Psoas muscle (tissue), 8 donors: ENCODE measurements at regions of chr1 and their contacts with region 1.

Region 1: DNA sequence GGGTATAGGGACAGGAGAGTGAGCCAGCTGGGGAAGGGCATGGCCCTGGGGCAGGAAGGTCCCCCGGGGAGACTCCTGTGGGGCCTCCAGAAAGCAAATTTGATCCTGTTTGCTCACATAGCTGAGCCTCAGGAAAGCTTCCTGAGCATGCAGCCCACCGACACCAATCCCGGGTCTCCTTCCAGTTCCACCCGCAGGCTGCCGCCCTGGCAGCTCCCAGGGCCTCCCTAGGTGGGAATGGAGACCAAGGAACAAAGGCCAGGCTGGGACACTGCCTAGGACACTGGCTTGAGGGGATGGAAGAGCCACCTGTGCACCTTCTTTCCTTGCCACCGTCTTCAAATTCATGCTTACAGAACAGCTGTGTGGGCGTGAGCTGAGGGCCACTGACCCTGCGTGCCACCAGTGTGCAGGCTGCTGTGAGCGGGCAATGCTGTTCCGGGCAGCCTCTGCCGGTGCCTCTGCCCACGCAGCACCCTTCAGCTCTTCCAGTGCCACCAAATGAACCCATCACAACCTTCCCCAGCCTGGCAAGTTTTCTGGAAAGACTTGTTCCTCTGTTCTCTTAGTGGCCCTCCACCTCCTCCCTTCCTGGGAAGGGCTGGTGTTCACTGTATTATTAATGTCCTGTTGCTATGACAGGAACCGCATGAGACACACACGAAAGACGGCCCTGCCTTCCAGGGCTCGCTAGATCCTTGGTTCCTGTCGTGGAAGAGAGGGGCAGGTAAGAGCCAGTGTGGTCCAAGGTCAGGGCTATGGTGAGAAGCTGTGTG is 53.6 kb downstream of the ACBD3 start:
- DNase-seq: no peak
- ATAC-seq: no peak
- H3K4me3 ChIP-seq: no peak overlapping the region
- H3K27ac ChIP-seq: no peak overlapping the region
- H3K4me1 ChIP-seq: peaks cover 2% of the 10 kb centered on the region
- H3K27me3 ChIP-seq: no peaks in the 10 kb centered on the region
- CTCF ChIP-seq: no peak

Region 2: GRCh38 chr1:226166341-226166740 is 33.4 kb after region 1 on chr1:
- intact Hi-C with region 1: loop called in 1 of 2 experiments (anchors 2 kb)
- DNase-seq: no peak
- ATAC-seq: no peak
- H3K4me3 ChIP-seq: no peak overlapping the region
- H3K27ac ChIP-seq: no peak overlapping the region
- H3K4me1 ChIP-seq: no peaks in the 10 kb centered on the region
- H3K27me3 ChIP-seq: no peaks in the 10 kb centered on the region
- CTCF ChIP-seq: no peak

Region 3: GRCh38 chr1:226195144-226195543 is 62.2 kb after region 1 on chr1:
- intact Hi-C with region 1: loop called in 1 of 2 experiments (anchors 2 kb)
- DNase-seq: no peak
- ATAC-seq: no peak
- H3K4me3 ChIP-seq: no peak overlapping the region
- H3K27ac ChIP-seq: no peak overlapping the region
- H3K4me1 ChIP-seq: no peaks in the 10 kb centered on the region
- H3K27me3 ChIP-seq: no peaks in the 10 kb centered on the region
- CTCF ChIP-seq: no peak

Region 4: GRCh38 chr1:226325178-226325577 is 192.3 kb after region 1 on chr1:
- intact Hi-C with region 1: no loop called
- DNase-seq: no peak
- ATAC-seq: no peak
- H3K4me3 ChIP-seq: no peak overlapping the region
- H3K27ac ChIP-seq: no peak overlapping the region
- H3K4me1 ChIP-seq: no peaks in the 10 kb centered on the region
- H3K27me3 ChIP-seq: no peaks in the 10 kb centered on the region
- CTCF ChIP-seq: no peak

Region 5: GRCh38 chr1:226379716-226380115 is 246.8 kb after region 1 on chr1:
- intact Hi-C with region 1: no loop called
- DNase-seq: no peak
- ATAC-seq: no peak
- H3K4me3 ChIP-seq: no peak overlapping the region
- H3K27ac ChIP-seq: no peak overlapping the region
- H3K4me1 ChIP-seq: no peaks in the 10 kb centered on the region
- H3K27me3 ChIP-seq: no peaks in the 10 kb centered on the region
- CTCF ChIP-seq: no peak